Calu3 (cell line): ENCODE measurements at regions of chr11 and their contacts with region 1.

Region 1: DNA sequence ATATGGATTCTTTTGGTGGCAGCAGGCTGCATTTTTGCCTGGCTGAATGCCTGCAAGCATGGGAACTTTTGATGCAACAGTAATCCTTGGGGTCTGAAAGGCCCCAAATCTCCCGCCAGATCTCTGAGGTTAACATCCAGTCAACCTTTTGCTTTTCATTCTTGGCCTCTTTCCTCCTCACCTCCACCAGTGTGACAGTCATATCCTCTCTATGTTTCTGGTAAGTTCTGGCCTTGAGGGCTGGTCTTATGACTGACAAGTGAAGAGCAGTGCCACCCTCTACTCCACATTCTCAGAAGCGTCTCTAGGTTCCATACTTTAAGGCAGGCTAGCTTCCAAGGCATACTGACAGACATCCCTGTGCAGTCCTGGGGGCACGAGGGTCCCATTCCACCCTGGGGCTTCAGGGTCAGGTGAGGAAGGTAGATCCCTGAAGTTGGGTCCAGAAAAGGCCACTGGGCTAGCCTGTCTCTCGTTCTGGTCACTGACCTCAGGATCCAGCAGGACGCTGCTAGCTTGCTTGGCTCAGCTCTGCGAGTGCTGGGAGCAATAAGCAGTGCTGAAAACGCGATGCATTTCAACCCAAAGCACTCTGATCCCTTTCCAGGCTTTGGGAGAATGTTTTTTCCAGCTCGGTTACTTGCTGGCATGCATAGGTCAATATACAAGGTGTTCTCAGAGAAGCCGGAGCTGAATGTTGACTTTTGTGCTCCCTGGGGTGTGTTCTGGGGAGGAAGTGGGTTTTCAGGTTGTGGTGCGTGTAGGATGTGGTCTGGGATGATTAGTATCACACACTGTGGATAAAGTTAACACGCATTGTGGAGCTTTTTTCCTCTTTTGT is 75.2 kb downstream of the PTPRJ start:
- DNase-seq: peak; percentile 66
- H3K4me3 Mint-ChIP-seq: peak overlapping the region; percentile 49
- H3K27ac Mint-ChIP-seq: peak overlapping the region; percentile 88
- H3K4me1 Mint-ChIP-seq: peaks cover 78% of the 10 kb centered on the region
- H3K27me3 Mint-ChIP-seq: no peaks in the 10 kb centered on the region
- CTCF ChIP-seq: no peak

Region 2: DNA sequence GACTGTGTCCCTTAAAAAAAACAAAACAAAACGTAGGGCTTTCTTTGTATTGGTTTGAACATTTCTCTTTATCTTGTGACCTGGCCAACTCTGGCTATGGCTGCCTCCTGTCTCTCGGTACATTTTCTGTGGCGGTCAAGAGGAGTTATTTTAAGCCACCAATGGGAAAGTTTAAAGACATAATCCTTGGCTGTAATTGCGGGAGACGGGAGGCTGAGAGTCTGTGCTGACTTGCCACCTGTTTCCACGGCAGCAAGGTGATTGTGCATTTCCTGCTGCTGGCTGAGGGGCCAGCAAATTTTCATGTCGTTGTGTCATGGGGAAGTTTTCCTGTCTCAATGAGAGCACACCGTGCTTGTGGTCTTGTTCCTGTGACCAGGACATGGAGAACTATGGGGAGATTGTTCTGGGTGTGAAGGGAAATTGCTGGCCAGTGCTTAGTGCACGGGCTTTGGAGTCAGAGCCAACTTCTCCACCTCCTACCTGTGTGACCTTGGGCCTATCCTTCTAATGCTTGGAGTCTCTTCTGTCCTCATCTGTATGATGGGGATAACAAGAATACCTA is 64.2 kb before region 1 on chr11:
- CTCF ChIA-PET with region 1: no interaction called
- intact Hi-C with region 1: loop called (anchors 2 kb)
- DNase-seq: peak; percentile 72
- H3K4me3 Mint-ChIP-seq: peak overlapping the region; percentile 64
- H3K27ac Mint-ChIP-seq: peak overlapping the region; percentile 98
- H3K4me1 Mint-ChIP-seq: peaks cover 60% of the 10 kb centered on the region
- H3K27me3 Mint-ChIP-seq: no peaks in the 10 kb centered on the region
- CTCF ChIP-seq: no peak

Region 3: GRCh38 chr11:48013269-48013901 is 42.1 kb before region 1 on chr11:
- CTCF ChIA-PET with region 1: no interaction called
- intact Hi-C with region 1: loop called (anchors 5 kb)
- DNase-seq: peak; percentile 46
- H3K4me3 Mint-ChIP-seq: peak overlapping the region; percentile 10
- H3K27ac Mint-ChIP-seq: no peak overlapping the region
- H3K4me1 Mint-ChIP-seq: peaks cover 46% of the 10 kb centered on the region
- H3K27me3 Mint-ChIP-seq: no peaks in the 10 kb centered on the region
- CTCF ChIP-seq: no peak

Region 4: DNA sequence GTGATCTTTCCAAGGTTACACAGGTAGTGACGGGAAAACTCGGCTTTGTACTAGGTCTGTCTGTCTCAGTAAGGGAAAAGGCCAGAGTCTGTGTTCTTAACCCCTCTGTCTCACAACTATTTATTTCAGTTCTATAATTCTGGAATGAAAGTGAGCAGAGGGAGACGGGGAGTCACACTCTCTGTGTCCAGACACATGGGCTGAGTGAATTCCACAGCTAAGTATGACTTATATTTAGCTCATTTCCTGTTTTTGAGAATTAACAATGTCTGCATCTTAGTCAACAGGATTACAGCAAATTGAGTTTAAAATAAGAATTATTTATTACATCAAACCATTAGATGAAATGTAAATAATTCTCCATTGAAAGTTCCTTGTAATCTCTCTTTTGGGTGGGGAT is 98.6 kb after region 1 on chr11:
- CTCF ChIA-PET with region 1: no interaction called
- intact Hi-C with region 1: no loop called
- DNase-seq: no peak
- H3K4me3 Mint-ChIP-seq: no peak overlapping the region
- H3K27ac Mint-ChIP-seq: no peak overlapping the region
- H3K4me1 Mint-ChIP-seq: no peaks in the 10 kb centered on the region
- H3K27me3 Mint-ChIP-seq: no peaks in the 10 kb centered on the region
- CTCF ChIP-seq: no peak

Region 5: GRCh38 chr11:48242501-48242900 is 187.0 kb after region 1 on chr11:
- CTCF ChIA-PET with region 1: no interaction called
- intact Hi-C with region 1: no loop called
- DNase-seq: no peak
- H3K4me3 Mint-ChIP-seq: no peak overlapping the region
- H3K27ac Mint-ChIP-seq: no peak overlapping the region
- H3K4me1 Mint-ChIP-seq: no peaks in the 10 kb centered on the region
- H3K27me3 Mint-ChIP-seq: peaks cover 20% of the 10 kb centered on the region
- CTCF ChIP-seq: no peak